ENCODE measurements at regions of chr1 and their contacts with region 1.

Region 1: DNA sequence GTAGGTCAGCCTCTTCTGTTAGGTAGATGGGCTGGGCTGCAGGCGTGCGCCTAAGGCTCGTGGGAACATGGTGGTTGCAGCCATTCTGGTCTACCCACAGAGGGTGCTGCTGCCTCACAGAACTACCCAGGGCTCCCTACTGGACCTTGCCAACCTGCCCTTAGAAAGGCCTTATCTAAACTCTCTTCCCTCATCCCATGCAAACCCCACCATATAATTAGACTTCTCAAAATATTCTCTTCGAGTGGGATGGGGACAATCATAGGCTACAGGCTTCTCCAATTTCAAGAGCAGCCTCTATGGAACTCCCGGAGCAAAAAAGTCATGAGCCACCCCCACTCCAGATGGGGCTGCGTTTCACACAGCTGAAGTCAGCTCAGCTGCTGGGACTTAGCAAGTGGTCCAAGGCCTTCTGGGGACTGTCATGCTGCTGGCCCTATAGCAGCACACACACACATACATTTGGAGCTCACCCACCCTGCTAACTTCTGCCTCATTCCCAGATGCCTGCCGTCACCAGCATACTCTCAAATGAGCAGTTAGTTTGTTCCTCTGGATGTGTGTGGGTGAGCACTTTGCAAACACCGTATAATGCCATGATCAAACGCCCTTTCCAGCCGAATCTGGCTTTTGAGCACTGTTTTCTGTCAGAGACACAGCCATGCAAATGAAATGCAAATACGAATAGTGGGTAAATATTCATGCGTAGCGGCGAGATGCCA is 6.1 kb upstream of the SDHB start:
- DNase-seq: peak; percentile 51
- H3K4me3 Mint-ChIP-seq: no peak overlapping the region
- H3K27ac Mint-ChIP-seq: no peak overlapping the region
- H3K4me1 Mint-ChIP-seq: peaks cover 11% of the 10 kb centered on the region
- H3K27me3 Mint-ChIP-seq: peaks cover 20% of the 10 kb centered on the region

Region 2: GRCh38 chr1:17075470-17076255 is 15.8 kb after region 1 on chr1:
- CTCF ChIA-PET with region 1: interaction called, 17 read pairs
- POLR2A ChIA-PET with region 1: no interaction called
- DNase-seq: peak; percentile 44
- H3K4me3 Mint-ChIP-seq: no peak overlapping the region
- H3K27ac Mint-ChIP-seq: no peak overlapping the region
- H3K4me1 Mint-ChIP-seq: peaks cover 4% of the 10 kb centered on the region
- H3K27me3 Mint-ChIP-seq: peaks cover 4% of the 10 kb centered on the region

Measured in activated CD4-positive, alpha-beta memory T cell treated with anti-CD3 and anti-CD28 coated beads, Interleukin-2, amount 10 ng/mL, durations not matched to agents 7 days and 5 days (primary cell).